Right lobe of liver (tissue), 6 donors: ENCODE measurements at regions of chr2 and their contacts with region 1.

Region 1: DNA sequence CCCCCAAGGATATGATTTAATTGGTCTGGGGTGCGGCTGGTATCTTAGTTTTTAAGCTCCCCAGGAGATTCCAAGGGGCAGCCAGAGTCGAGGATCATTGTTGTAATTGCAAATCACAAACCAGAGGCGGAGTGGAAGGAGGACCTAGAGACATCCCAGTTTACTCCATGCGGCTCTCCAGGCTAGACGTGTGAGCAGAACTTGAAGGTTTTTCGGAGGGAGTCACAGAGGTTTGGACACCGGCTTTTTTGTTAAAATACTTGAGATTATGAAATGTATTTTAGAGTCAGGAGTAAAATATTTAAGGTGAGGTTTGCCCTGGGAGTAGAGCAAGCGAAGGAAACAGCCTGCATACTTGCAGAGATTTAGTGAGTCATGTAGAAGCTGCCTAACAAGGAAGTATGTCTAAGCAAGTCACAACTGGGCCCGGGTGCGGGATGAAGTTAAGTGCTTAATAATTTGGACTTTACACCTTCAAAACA is 39.5 kb downstream of the TGOLN2 start:
- DNase-seq: no peak
- ATAC-seq: no peak
- H3K4me3 ChIP-seq: no peak overlapping the region
- H3K27ac ChIP-seq: no peak overlapping the region
- H3K4me1 ChIP-seq: no peaks in the 10 kb centered on the region
- H3K27me3 ChIP-seq: no peaks in the 10 kb centered on the region
- CTCF ChIP-seq: no peak
- POLR2A ChIP-seq: no peak

Region 2: GRCh38 chr2:85066874-85067351 is 221.4 kb before region 1 on chr2:
- intact Hi-C with region 1: loop called in 1 of 2 experiments (anchors 5 kb)
- DNase-seq: peak; percentile 74
- ATAC-seq: peak; percentile 94 to 97 (median 96)
- H3K4me3 ChIP-seq: peak overlapping the region; percentile 12 to 41 (median 27)
- H3K27ac ChIP-seq: no peak overlapping the region
- H3K4me1 ChIP-seq: peaks cover 0 to 8% (median 0%) of the 10 kb centered on the region in 4 donors
- H3K27me3 ChIP-seq: no peaks in the 10 kb centered on the region
- CTCF ChIP-seq: peak; percentile 69 to 84 (median 78)
- POLR2A ChIP-seq: no peak

Region 3: DNA sequence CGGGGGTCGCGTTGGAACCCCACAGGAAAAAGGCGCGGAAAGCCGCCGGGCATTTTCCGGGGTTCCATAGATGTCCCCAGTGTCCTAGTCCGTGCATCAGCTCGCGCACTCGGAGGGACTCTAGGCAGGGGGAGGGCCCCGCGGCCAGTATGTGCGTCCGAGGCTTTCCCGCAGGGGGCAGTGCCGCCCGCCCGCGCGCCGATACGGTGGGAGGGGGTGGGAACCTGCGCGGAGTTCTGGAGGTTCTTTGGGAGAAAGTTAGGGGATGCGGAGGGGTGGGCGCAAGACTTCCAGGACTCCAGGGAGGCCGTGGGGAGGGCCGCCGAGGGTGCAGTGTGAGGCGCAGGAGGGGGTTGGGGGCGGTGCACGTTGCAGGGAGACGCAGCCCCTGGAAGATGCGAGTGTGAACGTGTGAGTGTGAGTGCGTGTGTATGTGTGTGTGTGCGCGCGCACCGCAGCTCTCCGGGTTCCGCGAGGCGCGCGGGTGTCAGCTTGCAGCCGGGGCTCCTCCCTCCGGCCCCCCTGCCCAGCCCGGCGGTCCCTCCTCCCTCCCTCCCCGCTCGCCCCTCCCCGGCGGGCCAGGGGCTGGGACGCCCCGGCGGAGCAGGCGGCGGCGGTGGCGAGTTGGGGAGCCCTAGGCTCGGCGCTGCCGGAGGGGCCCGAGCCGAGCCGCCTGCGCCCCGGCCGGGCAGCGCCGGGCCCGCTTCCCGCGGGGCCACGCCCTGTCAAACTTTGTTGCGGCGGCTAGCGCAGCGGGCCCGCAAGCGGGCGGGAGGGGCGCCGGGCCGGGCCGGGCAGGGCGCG is 155.2 kb before region 1 on chr2 and contains the start of gene TCF7L1:
- intact Hi-C with region 1: loop called (anchors 10 kb)
- DNase-seq: peak; percentile 84 to 88 (median 86)
- ATAC-seq: peak; percentile 92 to 96 (median 94)
- H3K4me3 ChIP-seq: peak within 1 kb of the TSS; percentile 58 to 74 (median 65)
- H3K27ac ChIP-seq: peak within 1 kb of the TSS; percentile 55 to 71 (median 59)
- H3K4me1 ChIP-seq: peaks cover 0 to 10% (median 3%) of the 10 kb centered on the region in 4 donors
- H3K27me3 ChIP-seq: no peaks in the 10 kb centered on the region
- CTCF ChIP-seq: peak; percentile 76 to 90 (median 82)
- POLR2A ChIP-seq: no peak
- total RNA-seq, gene TCF7L1: 1.2 to 8.8 (median 3.7) TPM

Region 4: GRCh38 chr2:85188852-85189587 is 99.3 kb before region 1 on chr2:
- intact Hi-C with region 1: no loop called
- DNase-seq: no peak
- ATAC-seq: no peak
- H3K4me3 ChIP-seq: no peak overlapping the region
- H3K27ac ChIP-seq: no peak overlapping the region
- H3K4me1 ChIP-seq: no peaks in the 10 kb centered on the region
- H3K27me3 ChIP-seq: no peaks in the 10 kb centered on the region
- CTCF ChIP-seq: no peak
- POLR2A ChIP-seq: no peak